MCF 10A (cell line): ENCODE measurements at regions of chrX and their contacts with region 1.

Region 1: GRCh38 chrX:100895365-100896075 is 21.4 kb upstream of the NOX1 start:
- DNase-seq: peak; percentile 62
- H3K4me3 Mint-ChIP-seq: no peak overlapping the region
- H3K27ac Mint-ChIP-seq: no peak overlapping the region
- H3K4me1 Mint-ChIP-seq: peaks cover 6% of the 10 kb centered on the region
- H3K27me3 Mint-ChIP-seq: peaks cover 33% of the 10 kb centered on the region
- CTCF ChIP-seq: peak; percentile 57

Region 2: GRCh38 chrX:100884891-100885290 is 10.6 kb before region 1 on chrX:
- CTCF ChIA-PET with region 1: interaction called, 13 read pairs
- POLR2A ChIA-PET with region 1: no interaction called
- intact Hi-C with region 1: no loop called
- DNase-seq: no peak
- H3K4me3 Mint-ChIP-seq: no peak overlapping the region
- H3K27ac Mint-ChIP-seq: no peak overlapping the region
- H3K4me1 Mint-ChIP-seq: no peaks in the 10 kb centered on the region
- H3K27me3 Mint-ChIP-seq: peaks cover 54% of the 10 kb centered on the region
- CTCF ChIP-seq: no peak

Region 3: DNA sequence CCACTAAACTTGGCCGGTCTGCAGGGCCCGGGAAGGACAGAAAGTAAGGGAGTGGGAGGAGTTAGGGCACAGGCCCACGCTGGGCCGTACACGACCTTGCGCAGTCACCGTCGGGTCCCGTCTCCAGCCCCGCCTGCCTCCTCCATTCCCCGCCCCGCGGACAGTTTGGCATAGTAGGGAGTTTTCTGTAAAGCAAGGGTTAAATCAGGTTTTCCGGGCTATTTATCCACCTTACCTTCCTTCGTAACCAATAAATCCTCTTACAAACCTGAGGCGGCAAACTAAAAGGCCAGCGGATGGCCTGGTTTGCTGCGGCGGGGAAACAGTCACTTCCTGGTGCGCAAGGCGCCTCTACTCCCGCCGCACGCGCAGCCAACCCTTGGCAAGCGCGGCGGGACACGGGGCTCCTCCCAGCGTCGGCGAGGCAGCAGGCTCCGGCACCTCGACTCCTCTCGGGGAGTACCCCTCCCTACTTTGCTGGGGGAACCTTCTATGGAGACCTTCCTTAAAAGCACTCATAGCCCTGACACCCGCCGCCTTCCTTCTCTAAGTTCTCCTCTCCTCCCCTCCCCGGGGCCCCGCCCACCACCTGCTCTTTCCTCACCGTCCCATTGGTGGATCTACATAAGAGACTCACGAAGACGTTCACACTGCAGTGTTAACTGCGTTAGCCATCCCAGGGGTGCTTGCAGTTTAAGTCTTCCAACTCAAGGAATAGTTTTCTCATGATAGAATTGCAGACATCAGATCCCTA is 156.2 kb after region 1 on chrX and contains the start of gene TRMT2B:
- CTCF ChIA-PET with region 1: no interaction called
- POLR2A ChIA-PET with region 1: no interaction called
- intact Hi-C with region 1: loop called (anchors 5 kb)
- DNase-seq: peak; percentile 73
- H3K4me3 Mint-ChIP-seq: peak within 1 kb of the TSS; percentile 82
- H3K27ac Mint-ChIP-seq: peak within 1 kb of the TSS; percentile 90
- H3K4me1 Mint-ChIP-seq: peaks cover under 1% of the 10 kb centered on the region
- H3K27me3 Mint-ChIP-seq: no peaks in the 10 kb centered on the region
- CTCF ChIP-seq: no peak
- total RNA-seq, gene TRMT2B: 10.7 and 10.9 TPM in 2 replicates

Region 4: GRCh38 chrX:101097546-101098453 is 202.3 kb after region 1 on chrX and contains the start of gene CENPI:
- CTCF ChIA-PET with region 1: interaction called, 3 read pairs
- POLR2A ChIA-PET with region 1: no interaction called
- intact Hi-C with region 1: loop called (anchors 10 kb)
- DNase-seq: peak; percentile 89
- H3K4me3 Mint-ChIP-seq: peak within 1 kb of the TSS; percentile 90
- H3K27ac Mint-ChIP-seq: peak within 1 kb of the TSS; percentile 68
- H3K4me1 Mint-ChIP-seq: no peaks in the 10 kb centered on the region
- H3K27me3 Mint-ChIP-seq: peaks cover 45% of the 10 kb centered on the region
- CTCF ChIP-seq: no peak
- total RNA-seq, gene CENPI: 4.6 TPM in 2 replicates

Region 5: GRCh38 chrX:101206471-101206870 is 311.0 kb after region 1 on chrX:
- CTCF ChIA-PET with region 1: interaction called, 4 read pairs
- POLR2A ChIA-PET with region 1: no interaction called
- intact Hi-C with region 1: loop called (anchors 1 kb)
- DNase-seq: peak; percentile 49
- H3K4me3 Mint-ChIP-seq: no peak overlapping the region
- H3K27ac Mint-ChIP-seq: no peak overlapping the region
- H3K4me1 Mint-ChIP-seq: no peaks in the 10 kb centered on the region
- H3K27me3 Mint-ChIP-seq: peaks cover 24% of the 10 kb centered on the region
- CTCF ChIP-seq: peak; percentile 38

Region 6: DNA sequence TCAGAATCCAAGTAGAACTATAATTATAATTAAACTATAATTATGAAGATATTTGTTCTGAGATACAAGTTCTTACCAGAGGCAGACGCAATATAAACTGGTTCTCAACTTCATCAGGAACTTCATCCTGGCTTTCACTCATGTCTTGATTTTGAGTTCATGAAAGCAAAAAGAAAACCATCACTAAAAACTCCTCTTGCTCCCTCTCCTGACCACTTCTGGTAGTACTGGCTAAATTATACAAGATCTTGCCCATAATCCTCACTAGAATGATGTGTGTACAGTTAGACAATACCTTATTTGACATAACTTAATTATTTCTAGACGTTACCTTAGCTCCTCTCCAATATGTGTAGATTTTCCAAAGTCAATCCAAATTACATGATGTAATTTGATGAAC is 391.9 kb after region 1 on chrX:
- CTCF ChIA-PET with region 1: interaction called, 16 read pairs
- POLR2A ChIA-PET with region 1: no interaction called
- intact Hi-C with region 1: loop called (anchors 1 kb)
- DNase-seq: peak; percentile 56
- H3K4me3 Mint-ChIP-seq: no peak overlapping the region
- H3K27ac Mint-ChIP-seq: no peak overlapping the region
- H3K4me1 Mint-ChIP-seq: no peaks in the 10 kb centered on the region
- H3K27me3 Mint-ChIP-seq: peaks cover 24% of the 10 kb centered on the region
- CTCF ChIP-seq: peak; percentile 64